H1 (cell line): ENCODE measurements at regions of chr15 and their contacts with region 1.

Region 1: DNA sequence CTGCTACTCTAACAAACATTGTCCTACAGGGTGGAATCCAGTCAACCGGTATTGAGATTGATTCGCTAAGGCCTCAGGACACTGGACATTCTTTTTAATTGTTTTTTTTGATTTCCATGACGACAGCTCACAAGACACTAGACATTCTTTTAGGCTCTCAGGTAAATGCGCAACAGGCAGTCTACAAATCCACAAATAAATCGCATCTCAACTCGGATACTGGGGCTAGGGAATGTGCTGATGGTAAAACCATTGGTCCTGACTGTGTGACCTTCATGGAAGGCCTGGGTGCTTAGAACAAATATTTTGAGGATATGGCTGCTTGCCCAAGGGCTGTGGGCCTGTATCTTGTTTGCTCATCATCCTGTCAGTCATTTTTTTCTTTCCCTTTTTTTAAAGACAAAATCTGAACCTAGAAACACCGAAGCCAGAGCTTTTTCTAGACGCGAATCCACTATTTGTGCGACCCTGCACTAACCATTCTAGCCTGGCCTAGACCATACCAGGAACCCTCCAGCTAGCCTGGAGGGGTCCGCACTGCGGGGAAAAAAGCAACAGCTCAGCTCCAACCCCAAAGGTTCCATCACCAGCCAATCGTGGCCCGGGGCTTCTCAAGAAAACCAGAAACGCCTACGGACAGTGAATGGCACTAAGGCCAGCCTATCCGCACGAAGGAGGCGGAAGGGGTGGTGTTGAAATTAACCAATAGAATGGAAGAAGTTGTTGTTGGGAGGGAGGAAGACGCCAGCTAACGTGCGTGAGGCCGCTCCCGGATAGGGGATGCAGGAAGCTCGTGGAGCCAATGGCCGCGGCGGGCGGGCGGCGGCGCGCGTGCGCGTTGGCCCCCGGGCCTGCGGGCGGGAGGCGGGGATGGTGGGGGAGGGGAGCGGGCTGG is 18.1 kb upstream of the CHD2 start:
- DNase-seq: peak; percentile 98 to 100
- H3K4me3 ChIP-seq: peak overlapping the region in 3 of 4 experiments; percentile 21 to 100 (median 94); a peak in 6 of 8 replicates
- H3K27ac ChIP-seq: peak overlapping the region; percentile 80
- H3K4me1 ChIP-seq: peaks cover 9 to 20% (median 17%) of the 10 kb centered on the region in 4 experiments; a peak in 5 of 7 replicates
- H3K27me3 ChIP-seq: no peaks in the 10 kb centered on the region
- CTCF ChIP-seq: no peak
- EP300 ChIP-seq: no peak
- POLR2A ChIP-seq: peak; percentile 75 to 96
- RAD21 ChIP-seq: 0 out of 4 replicates have a peak, but pooled peaks have one; percentile 1 to 2

Region 2: DNA sequence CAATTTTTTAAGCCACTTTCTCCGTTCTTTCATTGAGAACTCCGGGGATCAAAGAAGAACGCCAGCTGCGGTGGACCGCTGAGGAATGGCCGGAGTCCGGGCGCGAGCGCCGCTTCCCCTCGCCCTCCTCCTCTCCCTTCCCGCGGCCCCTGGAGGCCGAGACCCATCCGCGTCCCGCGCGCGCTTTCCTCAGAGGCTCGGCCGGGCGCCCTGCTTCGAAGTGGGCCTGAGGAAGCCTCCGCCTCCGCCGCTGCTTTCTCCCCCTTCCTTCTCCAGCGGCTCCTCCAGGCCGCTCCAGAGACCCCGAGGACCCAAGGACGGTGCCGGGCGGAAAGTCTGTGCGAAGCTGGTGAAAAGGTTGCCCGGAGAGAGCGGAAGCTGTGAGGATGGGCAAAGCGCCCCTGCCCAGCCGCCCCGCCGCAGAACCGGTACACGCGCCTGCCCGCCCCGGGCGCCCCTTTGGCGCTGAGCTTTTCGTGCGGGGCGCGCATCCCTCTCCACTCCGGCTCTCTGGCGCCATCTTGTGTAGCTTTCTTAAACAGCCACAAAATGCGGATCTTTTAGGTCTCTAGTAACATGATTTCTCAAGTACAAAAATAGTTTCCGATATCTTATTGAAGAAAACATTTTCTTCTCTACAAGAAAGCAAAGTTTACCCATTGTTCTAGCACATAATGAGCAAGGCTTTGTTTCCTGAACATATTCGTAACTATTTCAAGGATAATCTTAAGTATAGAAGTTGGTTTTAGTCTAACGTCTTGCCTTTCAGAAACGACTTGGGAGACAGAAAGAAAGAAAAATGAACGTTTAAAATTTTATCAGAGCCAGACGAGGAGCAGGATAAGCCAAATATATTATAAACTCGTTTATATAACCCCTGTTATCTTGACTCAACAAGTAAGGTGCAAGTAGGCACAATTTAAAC is 167.3 kb before region 1 on chr15:
- CTCF ChIA-PET with region 1: no interaction called
- POLR2A ChIA-PET with region 1: no interaction called
- DNase-seq: peak in 1 of 2 experiments; percentile 92
- H3K4me3 ChIP-seq: peak overlapping the region; percentile 51 to 72 (median 62)
- H3K27ac ChIP-seq: no peak overlapping the region
- H3K4me1 ChIP-seq: peaks cover 0 to 5% (median 3%) of the 10 kb centered on the region in 4 experiments; a peak in 4 of 7 replicates
- H3K27me3 ChIP-seq: peaks cover 0 to 31% (median 14%) of the 10 kb centered on the region in 4 experiments; a peak in 6 of 7 replicates
- CTCF ChIP-seq: peak; percentile 52 to 83 (median 75)
- EP300 ChIP-seq: no peak
- POLR2A ChIP-seq: peak in 1 of 2 experiments; percentile 38; a peak in 2 of 3 replicates
- RAD21 ChIP-seq: peak; percentile 93 to 96

Region 3: GRCh38 chr15:92808978-92809879 is 72.8 kb before region 1 on chr15:
- CTCF ChIA-PET with region 1: interaction called, 32 read pairs
- POLR2A ChIA-PET with region 1: interaction called, 226 read pairs
- DNase-seq: peak; percentile 97 to 99
- H3K4me3 ChIP-seq: peak overlapping the region; percentile 45 to 75 (median 63)
- H3K27ac ChIP-seq: peak overlapping the region; percentile 99
- H3K4me1 ChIP-seq: peaks cover 11 to 16% (median 12%) of the 10 kb centered on the region in 4 experiments; a peak in 6 of 7 replicates
- H3K27me3 ChIP-seq: no peaks in the 10 kb centered on the region
- CTCF ChIP-seq: peak; percentile 84 to 93 (median 92)
- EP300 ChIP-seq: peak in 1 of 2 experiments; percentile 93; a peak in 2 of 3 replicates
- POLR2A ChIP-seq: peak in 1 of 2 experiments; percentile 96; a peak in 2 of 3 replicates
- RAD21 ChIP-seq: peak; percentile 71 to 81

Region 4: DNA sequence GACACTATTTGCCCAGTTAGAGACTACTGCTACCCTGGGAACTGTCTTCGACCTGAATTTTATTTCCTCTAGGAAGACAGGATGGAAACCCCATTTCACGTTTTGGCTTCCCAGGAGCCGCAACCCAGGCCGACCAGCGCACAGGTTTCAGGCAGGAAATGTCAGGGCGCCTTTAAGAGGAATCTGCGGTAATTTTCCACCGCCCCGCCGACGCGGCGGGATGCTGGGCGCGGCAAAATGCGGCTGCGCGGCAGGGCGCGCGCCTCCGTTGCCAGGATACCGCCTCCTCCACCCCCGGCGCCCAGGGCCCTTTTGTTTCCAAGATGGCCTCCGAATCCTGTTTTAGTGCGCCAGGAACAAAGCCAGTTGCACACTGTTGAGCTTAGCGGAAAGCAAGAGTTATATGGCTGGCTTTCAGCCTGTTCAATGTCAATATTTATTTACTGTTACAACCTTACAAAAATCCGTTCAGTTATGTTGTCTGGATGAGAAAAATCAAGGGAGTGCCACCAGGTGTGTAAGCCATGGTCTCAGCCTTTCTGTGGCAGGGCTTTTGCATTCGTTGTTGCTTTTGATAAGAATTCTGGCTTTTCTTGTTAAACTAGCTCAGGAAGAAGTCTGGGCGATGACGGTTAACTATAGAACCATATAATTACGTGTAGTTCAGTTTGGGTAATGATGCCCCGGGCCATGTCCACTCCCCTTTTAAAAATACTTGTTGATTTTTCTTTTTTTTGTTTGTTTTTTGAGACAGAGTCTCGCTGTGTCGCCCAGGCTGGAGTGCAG is 61.6 kb before region 1 on chr15:
- CTCF ChIA-PET with region 1: interaction called, 8 read pairs
- POLR2A ChIA-PET with region 1: interaction called, 60 read pairs
- DNase-seq: peak; percentile 70 to 94
- H3K4me3 ChIP-seq: peak overlapping the region; percentile 13 to 49 (median 34); a peak in 5 of 8 replicates
- H3K27ac ChIP-seq: peak overlapping the region; percentile 84
- H3K4me1 ChIP-seq: peaks cover 15 to 44% (median 39%) of the 10 kb centered on the region in 4 experiments; a peak in 6 of 7 replicates
- H3K27me3 ChIP-seq: peaks cover 0 to 2% (median 0%) of the 10 kb centered on the region in 4 experiments; a peak in 1 of 7 replicates
- CTCF ChIP-seq: no peak
- EP300 ChIP-seq: peak in 1 of 2 experiments; percentile 87; a peak in 2 of 3 replicates
- POLR2A ChIP-seq: peak in 1 of 2 experiments; percentile 77; a peak in 2 of 3 replicates
- RAD21 ChIP-seq: no peak

Region 5: GRCh38 chr15:92831655-92832328 is 50.3 kb before region 1 on chr15:
- CTCF ChIA-PET with region 1: interaction called, 3 read pairs
- POLR2A ChIA-PET with region 1: interaction called, 56 read pairs
- DNase-seq: peak; percentile 80 to 90
- H3K4me3 ChIP-seq: peak overlapping the region in 1 of 4 experiments; percentile 41; a peak in 1 of 8 replicates
- H3K27ac ChIP-seq: peak overlapping the region; percentile 73
- H3K4me1 ChIP-seq: peaks cover 3 to 15% (median 11%) of the 10 kb centered on the region in 4 experiments; a peak in 6 of 7 replicates
- H3K27me3 ChIP-seq: no peaks in the 10 kb centered on the region
- CTCF ChIP-seq: no peak
- EP300 ChIP-seq: peak in 1 of 2 experiments; percentile 62; a peak in 1 of 3 replicates
- POLR2A ChIP-seq: peak; percentile 67 to 90
- RAD21 ChIP-seq: peak; percentile 36 to 42

Region 6: DNA sequence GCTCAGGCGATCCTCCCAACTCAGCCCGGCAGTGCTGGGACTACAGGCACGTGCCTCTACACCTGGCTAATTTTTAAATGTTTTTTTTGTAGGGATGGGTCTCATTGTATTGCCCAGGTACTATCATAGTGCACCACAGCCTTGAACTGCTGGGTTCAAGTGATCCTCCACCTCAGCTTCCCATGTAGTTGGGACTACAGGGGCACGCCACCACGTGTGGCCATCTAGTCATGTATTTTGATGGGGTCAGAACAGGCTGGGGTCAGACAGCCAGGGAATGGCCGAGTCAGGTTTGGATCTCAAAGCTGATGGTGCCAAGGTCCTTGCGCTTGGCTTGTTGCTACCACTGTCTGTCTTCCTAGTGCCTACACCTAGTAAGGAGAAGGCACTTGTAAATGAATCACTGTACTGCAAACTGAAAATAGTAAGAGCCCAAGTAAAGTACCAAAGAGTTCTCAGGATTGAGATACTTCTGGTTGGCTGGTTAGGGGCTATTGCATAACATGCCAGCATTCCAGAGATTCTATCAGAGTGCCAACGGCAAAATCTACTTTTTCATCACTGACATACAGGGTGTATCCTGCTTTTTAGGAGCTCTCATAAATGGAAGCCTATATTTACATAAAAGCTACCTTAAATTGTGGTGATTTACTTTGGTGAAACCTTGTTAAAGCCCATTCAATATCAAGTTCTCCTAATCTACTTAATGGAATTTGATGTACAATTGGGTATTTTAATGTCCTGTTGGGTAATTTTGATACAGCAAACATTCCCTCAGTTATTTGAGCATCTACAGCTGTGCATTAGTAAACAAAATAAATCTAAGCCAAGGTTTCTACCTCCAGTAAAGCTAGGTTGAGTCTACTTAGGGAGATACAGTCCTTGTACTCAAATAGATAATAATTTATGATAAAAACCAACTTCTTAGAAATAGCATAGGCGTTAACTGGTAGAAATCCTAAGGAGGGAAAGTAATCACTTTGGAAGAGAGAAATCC is 12.8 kb before region 1 on chr15:
- CTCF ChIA-PET with region 1: interaction called, 5 read pairs
- POLR2A ChIA-PET with region 1: interaction called, 36 read pairs
- DNase-seq: peak in 1 of 2 experiments; percentile 40
- H3K4me3 ChIP-seq: no peak overlapping the region
- H3K27ac ChIP-seq: no peak overlapping the region
- H3K4me1 ChIP-seq: no peaks in the 10 kb centered on the region; a peak in 1 of 7 replicates
- H3K27me3 ChIP-seq: no peaks in the 10 kb centered on the region; a peak in 1 of 7 replicates
- CTCF ChIP-seq: no peak
- EP300 ChIP-seq: no peak
- POLR2A ChIP-seq: no peak
- RAD21 ChIP-seq: no peak

Region 7: DNA sequence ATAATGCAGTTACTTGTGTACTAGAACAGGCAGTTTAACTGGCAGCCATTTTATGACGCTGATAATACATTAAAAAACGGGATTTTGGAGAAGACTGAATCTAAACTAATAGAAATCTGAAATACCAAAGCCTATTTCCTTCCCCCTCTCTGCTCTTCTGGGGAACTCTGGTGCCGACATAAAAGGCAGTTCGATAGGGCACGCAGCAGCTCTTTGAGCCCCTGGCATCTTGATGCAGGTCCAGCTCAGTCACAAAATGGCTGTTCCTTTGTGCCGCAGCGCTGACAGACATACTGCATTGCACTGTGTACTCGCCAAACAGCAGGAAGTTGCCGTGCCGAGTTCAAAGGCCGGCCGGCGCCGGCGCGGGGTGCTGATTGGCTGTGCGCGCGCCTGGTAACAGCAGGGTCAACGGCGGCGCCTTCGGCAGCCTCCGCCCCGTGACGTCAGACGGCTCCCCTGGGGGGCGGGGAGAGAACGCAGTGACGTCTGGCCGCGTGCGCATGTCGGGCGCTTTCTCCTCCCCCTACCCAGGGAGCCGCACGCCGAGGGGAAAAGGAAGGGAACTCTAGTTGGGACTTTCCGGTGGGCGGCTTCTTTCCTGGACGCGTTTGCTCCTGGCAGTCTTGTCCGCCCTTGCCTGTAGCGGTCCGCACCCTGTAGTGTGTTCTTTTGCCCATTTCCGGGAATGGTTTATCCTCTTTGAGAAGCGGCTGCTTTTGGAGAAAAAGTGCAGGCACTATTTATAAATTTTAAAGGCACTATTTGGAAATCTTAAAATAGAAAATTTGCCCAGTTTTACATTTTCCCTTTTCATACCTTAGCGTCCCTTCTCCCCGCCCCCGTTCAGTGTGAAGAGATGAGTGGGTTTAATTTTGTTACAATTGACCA is 22.1 kb after region 1 on chr15:
- CTCF ChIA-PET with region 1: interaction called, 6 read pairs
- POLR2A ChIA-PET with region 1: interaction called, 255 read pairs
- DNase-seq: peak; percentile 98 to 99
- H3K4me3 ChIP-seq: peak overlapping the region; percentile 50 to 97 (median 88)
- H3K27ac ChIP-seq: peak overlapping the region; percentile 98
- H3K4me1 ChIP-seq: peaks cover 0 to 16% (median 4%) of the 10 kb centered on the region in 4 experiments; a peak in 5 of 7 replicates
- H3K27me3 ChIP-seq: no peaks in the 10 kb centered on the region
- CTCF ChIP-seq: no peak
- EP300 ChIP-seq: peak; percentile 10 to 38; a peak in 2 of 3 replicates
- POLR2A ChIP-seq: peak; percentile 98 to 99
- RAD21 ChIP-seq: no peak

Region 8: GRCh38 chr15:92917606-92918407 is 35.8 kb after region 1 on chr15:
- CTCF ChIA-PET with region 1: interaction called, 7 read pairs
- POLR2A ChIA-PET with region 1: interaction called, 33 read pairs
- DNase-seq: peak; percentile 80 to 96
- H3K4me3 ChIP-seq: no peak overlapping the region
- H3K27ac ChIP-seq: peak overlapping the region; percentile 67
- H3K4me1 ChIP-seq: peaks cover 0 to 14% (median 8%) of the 10 kb centered on the region in 4 experiments; a peak in 5 of 7 replicates
- H3K27me3 ChIP-seq: no peaks in the 10 kb centered on the region
- CTCF ChIP-seq: peak; percentile 44 to 82 (median 81)
- EP300 ChIP-seq: peak in 1 of 2 experiments; percentile 54; a peak in 1 of 3 replicates
- POLR2A ChIP-seq: no peak
- RAD21 ChIP-seq: peak; percentile 81 to 87